RWPE1 (cell line): ENCODE measurements at regions of chr12 and their contacts with region 1.

Region 1: GRCh38 chr12:130031571-130032189 is 127.9 kb upstream of the TMEM132D start:
- DNase-seq: peak; percentile 55
- H3K27ac ChIP-seq: no peak overlapping the region
- CTCF ChIP-seq: peak; percentile 73

Region 2: DNA sequence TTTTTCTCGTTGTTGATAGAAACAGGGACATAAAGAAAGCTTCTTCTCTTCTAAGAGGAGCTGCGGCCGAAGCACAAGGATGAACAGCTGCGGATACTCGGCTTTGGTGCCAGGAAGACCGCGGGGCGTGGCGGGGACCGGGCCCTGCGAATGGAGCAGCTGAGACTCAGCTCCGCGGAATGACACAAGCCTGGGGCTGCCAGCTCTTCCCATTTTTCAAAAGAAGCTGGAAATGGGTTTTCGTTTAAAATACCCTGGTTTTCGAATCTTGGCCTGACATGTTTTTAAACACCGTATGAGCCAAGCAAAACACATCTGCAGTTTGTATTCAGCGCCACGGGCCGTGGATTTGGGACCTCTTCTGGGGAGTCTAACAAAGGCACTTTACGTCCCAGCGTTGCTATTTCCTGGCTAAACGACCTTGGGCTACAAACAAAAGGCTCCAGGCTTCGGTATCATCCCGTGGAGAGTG is 14.1 kb before region 1 on chr12:
- CTCF ChIA-PET with region 1: interaction called, 10 read pairs
- POLR2A ChIA-PET with region 1: no interaction called
- DNase-seq: no peak
- H3K27ac ChIP-seq: no peak overlapping the region
- CTCF ChIP-seq: no peak

Region 3: GRCh38 chr12:130041983-130042812 is 10.5 kb after region 1 on chr12:
- CTCF ChIA-PET with region 1: interaction called, 14 read pairs
- POLR2A ChIA-PET with region 1: no interaction called
- DNase-seq: peak; percentile 57
- H3K27ac ChIP-seq: no peak overlapping the region
- CTCF ChIP-seq: peak; percentile 34

Region 4: GRCh38 chr12:130214686-130215370 is 183.1 kb after region 1 on chr12:
- CTCF ChIA-PET with region 1: no interaction called
- POLR2A ChIA-PET with region 1: no interaction called
- DNase-seq: peak; percentile 50
- H3K27ac ChIP-seq: peak overlapping the region; percentile 43; the same call in 1 of the 2 replicates
- CTCF ChIP-seq: no peak